Heart left ventricle (tissue), 16 donors: ENCODE measurements at regions of chr1 and their contacts with region 1.

Region 1: GRCh38 chr1:115771847-115772457 is 3.4 kb upstream of the CASQ2 start:
- DNase-seq: peak in 4 of 5 donors; percentile 68 to 79 (median 74)
- ATAC-seq: peak; percentile 65 to 83 (median 74)
- H3K4me3 ChIP-seq: peak overlapping the region in 4 of 12 donors; percentile 4 to 39 (median 32)
- H3K27ac ChIP-seq: peak overlapping the region in 9 of 12 donors; percentile 47 to 90 (median 68)
- H3K4me1 ChIP-seq: peaks cover 0 to 27% (median 6%) of the 10 kb centered on the region in 12 donors
- H3K27me3 ChIP-seq: no peaks in the 10 kb centered on the region
- CTCF ChIP-seq: peak; percentile 54 to 83 (median 74)
- POLR2A ChIP-seq: no peak

Region 2: GRCh38 chr1:115496904-115497527 is 274.9 kb before region 1 on chr1:
- intact Hi-C with region 1: loop called in 1 of 10 experiments (anchors 10 kb)
- DNase-seq: no peak
- ATAC-seq: no peak
- H3K4me3 ChIP-seq: no peak overlapping the region
- H3K27ac ChIP-seq: no peak overlapping the region
- H3K4me1 ChIP-seq: peaks cover 0 to 3% (median 0%) of the 10 kb centered on the region in 12 donors
- H3K27me3 ChIP-seq: no peaks in the 10 kb centered on the region
- CTCF ChIP-seq: no peak
- POLR2A ChIP-seq: no peak

Region 3: GRCh38 chr1:115545791-115546733 is 225.9 kb before region 1 on chr1:
- intact Hi-C with region 1: loop called in 2 of 10 experiments (anchors 5 kb)
- DNase-seq: peak in 3 of 5 donors; percentile 25 to 56 (median 53)
- ATAC-seq: peak; percentile 68 to 90 (median 83)
- H3K4me3 ChIP-seq: no peak overlapping the region
- H3K27ac ChIP-seq: peak overlapping the region in 3 of 12 donors; percentile 16 to 36 (median 25)
- H3K4me1 ChIP-seq: peaks cover 2 to 17% (median 11%) of the 10 kb centered on the region in 12 donors
- H3K27me3 ChIP-seq: no peaks in the 10 kb centered on the region
- CTCF ChIP-seq: peak; percentile 21 to 64 (median 46)
- POLR2A ChIP-seq: no peak

Region 4: GRCh38 chr1:115609021-115609420 is 162.9 kb before region 1 on chr1:
- intact Hi-C with region 1: loop called (anchors 1 to 5 kb)
- DNase-seq: no peak
- ATAC-seq: no peak
- H3K4me3 ChIP-seq: no peak overlapping the region
- H3K27ac ChIP-seq: no peak overlapping the region
- H3K4me1 ChIP-seq: peaks cover 0 to 6% (median 0%) of the 10 kb centered on the region in 12 donors
- H3K27me3 ChIP-seq: no peaks in the 10 kb centered on the region
- CTCF ChIP-seq: no peak
- POLR2A ChIP-seq: no peak

Region 5: GRCh38 chr1:115706587-115707425 is 65.1 kb before region 1 on chr1:
- intact Hi-C with region 1: no loop called
- DNase-seq: no peak
- ATAC-seq: peak; percentile 10 to 43 (median 14)
- H3K4me3 ChIP-seq: no peak overlapping the region
- H3K27ac ChIP-seq: peak overlapping the region in 1 of 12 donors; percentile 61
- H3K4me1 ChIP-seq: peaks cover 0 to 73% (median 22%) of the 10 kb centered on the region in 12 donors
- H3K27me3 ChIP-seq: peaks cover 0 to 3% (median 0%) of the 10 kb centered on the region in 9 donors
- CTCF ChIP-seq: peak; percentile 53 to 83 (median 73)
- POLR2A ChIP-seq: no peak

Region 6: DNA sequence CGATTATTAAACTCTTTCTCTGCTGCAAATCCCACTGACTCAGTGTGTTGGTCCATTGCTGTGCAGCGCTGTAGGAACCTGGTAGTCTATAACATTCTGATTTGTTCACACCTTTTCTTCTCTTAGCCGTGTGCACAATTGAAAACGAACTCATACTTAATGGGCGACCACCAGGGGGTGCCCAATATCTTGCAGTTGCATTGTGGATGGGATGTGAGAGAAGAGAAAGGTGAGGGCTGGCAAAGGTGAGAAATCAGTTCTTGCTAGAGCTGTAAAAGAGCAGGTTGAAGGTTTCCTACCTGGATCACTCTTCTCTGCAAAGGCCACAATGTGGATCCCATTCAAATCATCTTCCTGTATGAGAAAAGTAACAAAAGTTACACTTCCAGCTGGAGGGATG is 54.4 kb before region 1 on chr1:
- intact Hi-C with region 1: loop called in 5 of 10 experiments (anchors 2 to 5 kb)
- DNase-seq: peak in 2 of 5 donors; percentile 27 to 62
- ATAC-seq: peak in 2 of 4 donors; percentile 4 to 21
- H3K4me3 ChIP-seq: no peak overlapping the region
- H3K27ac ChIP-seq: no peak overlapping the region
- H3K4me1 ChIP-seq: peaks cover 0 to 4% (median 0%) of the 10 kb centered on the region in 12 donors
- H3K27me3 ChIP-seq: no peaks in the 10 kb centered on the region
- CTCF ChIP-seq: peak; percentile 31 to 65 (median 52)
- POLR2A ChIP-seq: no peak

Region 7: GRCh38 chr1:115727706-115728249 is 44.2 kb before region 1 on chr1:
- intact Hi-C with region 1: loop called in 2 of 10 experiments (anchors 2 to 5 kb)
- DNase-seq: peak; percentile 52 to 77 (median 65)
- ATAC-seq: peak; percentile 79 to 90 (median 82)
- H3K4me3 ChIP-seq: no peak overlapping the region
- H3K27ac ChIP-seq: peak overlapping the region; percentile 52 to 88 (median 74)
- H3K4me1 ChIP-seq: peaks cover 0 to 54% (median 29%) of the 10 kb centered on the region in 12 donors
- H3K27me3 ChIP-seq: no peaks in the 10 kb centered on the region
- CTCF ChIP-seq: no peak
- POLR2A ChIP-seq: no peak